ENCODE measurements at regions of chr2 and their contacts with region 1.

Region 1: GRCh38 chr2:223957092-223957851 is at the start of gene MRPL44:
- DNase-seq: peak; percentile 92 to 99 (median 96)
- ATAC-seq: peak; percentile 100
- H3K4me3 ChIP-seq: peak within 1 kb of the TSS; percentile 90
- H3K4me3 Mint-ChIP-seq: peak within 1 kb of the TSS; percentile 90 to 97 (median 94)
- H3K27ac ChIP-seq: peak within 1 kb of the TSS; percentile 81
- H3K27ac Mint-ChIP-seq: peak within 1 kb of the TSS; percentile 78 to 98 (median 95)
- H3K4me1 ChIP-seq: peaks cover 40 to 48% of the 10 kb centered on the region in 2 donors
- H3K4me1 Mint-ChIP-seq: peaks cover 33 to 70% (median 58%) of the 10 kb centered on the region in 7 donors
- H3K27me3 ChIP-seq: no peaks in the 10 kb centered on the region
- H3K27me3 Mint-ChIP-seq: no peaks in the 10 kb centered on the region
- total RNA-seq, gene MRPL44: 18.0 to 31.2 (median 26.8) TPM

Region 2: DNA sequence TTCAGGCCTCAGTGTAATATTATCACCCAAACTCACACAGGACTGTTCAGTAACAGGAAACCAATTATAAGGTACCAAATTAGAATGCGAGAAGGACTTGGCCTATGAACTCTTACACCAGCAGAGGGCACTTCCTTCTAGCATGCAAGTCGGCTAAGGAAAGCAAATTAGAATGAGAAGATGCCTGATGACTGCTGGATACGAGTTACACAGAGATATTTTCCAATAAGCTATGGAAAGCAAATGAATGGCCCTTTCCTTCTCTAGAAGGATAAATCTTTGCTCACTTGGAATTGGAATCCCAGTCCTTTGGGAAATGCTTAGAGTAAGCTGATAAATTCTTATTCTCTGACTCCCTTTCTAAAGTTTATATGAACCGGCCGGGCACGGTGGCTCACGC is 229.7 kb before region 1 on chr2:
- CTCF ChIA-PET with region 1: no interaction called
- POLR2A ChIA-PET with region 1: no interaction called
- intact Hi-C with region 1: loop called in 1 of 2 experiments (anchors 10 kb)
- DNase-seq: peak in 7 of 9 donors; percentile 2 to 42 (median 29)
- ATAC-seq: peak; percentile 71
- H3K4me3 ChIP-seq: no peak overlapping the region
- H3K4me3 Mint-ChIP-seq: no peak overlapping the region
- H3K27ac ChIP-seq: no peak overlapping the region
- H3K27ac Mint-ChIP-seq: no peak overlapping the region
- H3K4me1 ChIP-seq: no peaks in the 10 kb centered on the region
- H3K4me1 Mint-ChIP-seq: peaks cover 0 to 1% (median 0%) of the 10 kb centered on the region in 7 donors
- H3K27me3 ChIP-seq: no peaks in the 10 kb centered on the region
- H3K27me3 Mint-ChIP-seq: peaks cover 2 to 7% (median 7%) of the 10 kb centered on the region in 5 donors

Region 3: GRCh38 chr2:223944703-223945531 is 12.4 kb before region 1 on chr2 and contains the start of gene WDFY1:
- CTCF ChIA-PET with region 1: interaction called, 8 read pairs
- POLR2A ChIA-PET with region 1: interaction called, 30 read pairs
- intact Hi-C with region 1: loop called (anchors 1 kb)
- DNase-seq: peak; percentile 64 to 80 (median 70)
- ATAC-seq: peak; percentile 95
- H3K4me3 ChIP-seq: peak within 1 kb of the TSS; percentile 77
- H3K4me3 Mint-ChIP-seq: peak within 1 kb of the TSS; percentile 88 to 98 (median 92)
- H3K27ac ChIP-seq: peak within 1 kb of the TSS; percentile 67
- H3K27ac Mint-ChIP-seq: peak within 1 kb of the TSS; percentile 76 to 93 (median 85)
- H3K4me1 ChIP-seq: peaks cover 24 to 40% of the 10 kb centered on the region in 2 donors
- H3K4me1 Mint-ChIP-seq: peaks cover 39 to 67% (median 62%) of the 10 kb centered on the region in 7 donors
- H3K27me3 ChIP-seq: no peaks in the 10 kb centered on the region
- H3K27me3 Mint-ChIP-seq: no peaks in the 10 kb centered on the region
- total RNA-seq, gene WDFY1: 25.3 to 80.1 (median 29.9) TPM

Region 4: DNA sequence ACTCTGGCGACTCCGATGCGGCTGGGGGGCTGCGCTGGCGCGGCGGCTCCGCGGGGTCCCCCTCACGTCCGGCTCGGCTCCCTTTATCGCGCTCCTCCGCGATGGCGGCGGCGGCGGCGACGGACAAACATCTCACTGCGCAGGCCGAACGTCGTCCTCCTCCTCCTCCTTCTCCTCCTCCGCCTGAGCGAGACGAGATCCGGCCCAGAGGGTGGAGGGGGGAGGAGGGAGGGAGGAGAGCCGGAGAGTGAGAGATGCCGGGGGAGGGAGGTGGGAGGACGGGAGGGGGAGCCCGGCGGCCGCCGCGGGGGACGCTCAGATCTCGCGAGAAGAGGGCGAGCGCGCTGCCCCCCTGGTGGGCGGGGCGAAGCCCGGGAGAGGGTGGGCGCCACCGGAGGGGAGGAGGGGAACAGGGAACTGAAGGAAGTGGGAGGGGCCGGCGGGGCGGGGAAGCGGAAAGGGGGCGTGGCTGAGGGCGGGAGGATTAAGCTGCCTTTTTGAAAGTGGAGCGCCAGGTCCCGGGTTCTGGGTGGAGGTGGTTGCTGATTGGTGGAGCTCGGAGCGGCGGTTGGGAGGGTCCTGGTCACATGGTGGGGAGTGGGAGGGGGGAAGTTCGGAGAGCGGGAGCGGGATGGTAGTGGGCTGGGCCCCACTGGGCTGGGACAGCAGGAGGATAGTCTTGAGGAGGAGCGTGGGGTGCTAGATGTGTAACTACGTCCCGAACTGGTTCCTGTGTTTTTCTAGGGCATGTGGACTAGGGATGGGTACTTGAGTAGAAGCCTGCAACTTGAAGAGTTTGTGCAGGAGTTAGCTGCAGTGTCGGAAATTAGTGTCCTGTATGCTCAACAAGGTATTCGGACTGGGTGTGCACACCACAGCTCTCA is 628.2 kb after region 1 on chr2 and contains the start of gene CUL3:
- CTCF ChIA-PET with region 1: no interaction called
- POLR2A ChIA-PET with region 1: no interaction called
- intact Hi-C with region 1: loop called (anchors 1 kb)
- DNase-seq: peak; percentile 98 to 100 (median 99)
- ATAC-seq: peak; percentile 96
- H3K4me3 ChIP-seq: peak within 1 kb of the TSS; percentile 93
- H3K4me3 Mint-ChIP-seq: peak within 1 kb of the TSS; percentile 84 to 100 (median 98)
- H3K27ac ChIP-seq: peak within 1 kb of the TSS; percentile 92
- H3K27ac Mint-ChIP-seq: peak within 1 kb of the TSS; percentile 85 to 98 (median 93)
- H3K4me1 ChIP-seq: peaks cover 22 to 28% of the 10 kb centered on the region in 2 donors
- H3K4me1 Mint-ChIP-seq: peaks cover 9 to 50% (median 45%) of the 10 kb centered on the region in 7 donors
- H3K27me3 ChIP-seq: no peaks in the 10 kb centered on the region
- H3K27me3 Mint-ChIP-seq: no peaks in the 10 kb centered on the region
- total RNA-seq, gene CUL3: 70.5 to 97.0 (median 87.8) TPM

Region 5: DNA sequence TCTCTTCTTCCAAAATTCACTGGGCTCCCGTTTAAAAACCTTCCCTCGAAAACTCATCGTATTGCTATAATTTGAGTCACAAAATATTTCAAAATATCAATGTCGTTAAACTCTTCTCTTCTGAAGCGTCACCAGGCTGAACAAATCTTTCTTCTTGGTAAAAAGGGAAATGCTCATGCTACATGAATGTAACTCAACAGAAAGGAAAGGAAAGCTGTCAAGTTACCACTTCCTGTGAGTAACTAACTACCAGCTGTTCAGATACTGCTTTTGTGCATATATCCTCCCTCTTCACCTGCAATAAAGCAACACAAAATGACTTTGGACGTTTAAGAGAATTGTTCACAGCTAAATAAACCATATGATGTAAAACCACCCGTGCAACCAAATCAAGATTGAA is 989.6 kb after region 1 on chr2:
- CTCF ChIA-PET with region 1: no interaction called
- POLR2A ChIA-PET with region 1: no interaction called
- intact Hi-C with region 1: loop called in 1 of 2 experiments (anchors 10 kb)
- DNase-seq: peak in 7 of 9 donors; percentile 60 to 82 (median 77)
- ATAC-seq: peak; percentile 90
- H3K4me3 ChIP-seq: peak overlapping the region; percentile 59
- H3K4me3 Mint-ChIP-seq: peak overlapping the region; percentile 79 to 99 (median 91)
- H3K27ac ChIP-seq: peak overlapping the region; percentile 84
- H3K27ac Mint-ChIP-seq: peak overlapping the region; percentile 68 to 98 (median 92)
- H3K4me1 ChIP-seq: peaks cover 52 to 69% of the 10 kb centered on the region in 2 donors
- H3K4me1 Mint-ChIP-seq: peaks cover 54 to 91% (median 79%) of the 10 kb centered on the region in 7 donors
- H3K27me3 ChIP-seq: no peaks in the 10 kb centered on the region
- H3K27me3 Mint-ChIP-seq: no peaks in the 10 kb centered on the region

Measured in naive thymus-derived CD4-positive, alpha-beta T cell (primary cell).